Activated CD8-positive, alpha-beta T cell treated with anti-CD3 and anti-CD28 coated beads for 36 hours (primary cell): ENCODE measurements at regions of chr17 and their contacts with region 1.

Region 1: DNA sequence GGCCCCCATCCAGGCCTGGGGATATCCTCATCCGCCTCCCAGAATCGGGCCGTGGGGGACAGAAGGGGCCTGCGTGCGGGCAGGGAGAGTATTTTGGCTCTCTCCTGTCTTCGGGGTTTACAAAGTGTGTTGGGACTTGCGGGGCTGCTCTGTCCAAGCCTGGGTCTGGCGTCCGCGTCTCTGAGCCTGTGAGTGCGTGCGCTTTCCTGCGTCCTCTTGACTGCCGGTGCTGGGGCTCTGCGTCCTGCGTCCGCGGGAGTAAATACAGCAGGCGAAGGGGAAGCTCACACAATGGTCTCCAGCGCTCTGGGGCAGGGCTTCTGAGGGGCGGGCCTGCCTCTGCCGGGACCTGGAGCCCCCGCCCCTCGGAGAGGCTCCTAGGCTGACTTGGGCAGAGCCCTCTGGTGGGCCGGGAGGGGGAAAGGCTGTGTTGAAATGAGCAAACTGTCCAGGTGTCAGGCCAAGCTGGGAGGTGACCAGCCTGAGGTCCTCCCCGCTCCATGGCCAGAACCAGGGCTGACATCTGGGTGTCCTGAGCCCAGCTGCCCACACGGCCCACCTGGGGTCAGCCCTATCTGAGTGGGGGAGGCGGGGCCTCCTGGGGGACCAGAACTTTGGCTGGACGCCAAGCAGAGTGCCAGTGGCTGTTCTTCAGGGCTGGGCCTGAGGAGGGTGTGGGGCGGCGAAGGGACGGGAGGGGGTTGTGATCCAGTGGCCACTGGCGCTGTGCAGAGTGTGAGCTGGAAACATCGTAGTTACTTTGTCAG is 233.6 kb downstream of the SEC14L1 start:
- DNase-seq: peak; percentile 89
- ATAC-seq: peak; percentile 78
- H3K4me3 Mint-ChIP-seq: peak overlapping the region; percentile 92
- H3K27ac Mint-ChIP-seq: peak overlapping the region; percentile 91
- H3K4me1 Mint-ChIP-seq: peaks cover 56% of the 10 kb centered on the region
- H3K27me3 Mint-ChIP-seq: no peaks in the 10 kb centered on the region
- CTCF ChIP-seq: peak; percentile 31

Region 2: DNA sequence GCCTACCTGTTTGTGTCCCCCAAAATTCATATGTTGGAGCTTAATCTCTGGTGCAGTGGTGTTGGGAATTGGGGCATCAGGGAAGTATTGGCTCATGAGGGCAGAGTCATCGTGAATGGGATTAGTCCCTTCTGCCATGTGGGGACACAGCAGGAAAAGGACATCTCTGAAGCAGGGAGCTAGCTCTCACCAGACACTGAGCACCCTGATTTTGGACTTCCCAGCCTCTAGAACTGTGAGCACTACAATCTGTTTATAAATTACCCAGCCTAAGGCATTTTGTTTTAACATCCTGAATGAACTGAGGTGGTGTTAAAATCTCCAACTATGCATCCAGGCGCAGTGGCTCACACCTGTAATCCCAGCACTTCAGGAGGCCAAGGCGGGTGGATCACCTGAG is 27.6 kb before region 1 on chr17:
- CTCF ChIA-PET with region 1: no interaction called
- POLR2A ChIA-PET with region 1: no interaction called
- intact Hi-C with region 1: no loop called
- DNase-seq: no peak
- ATAC-seq: no peak
- H3K4me3 Mint-ChIP-seq: no peak overlapping the region
- H3K27ac Mint-ChIP-seq: no peak overlapping the region
- H3K4me1 Mint-ChIP-seq: peaks cover 39% of the 10 kb centered on the region
- H3K27me3 Mint-ChIP-seq: no peaks in the 10 kb centered on the region
- CTCF ChIP-seq: no peak

Region 3: GRCh38 chr17:77391668-77392375 is 17.5 kb after region 1 on chr17:
- CTCF ChIA-PET with region 1: interaction called, 20 read pairs
- POLR2A ChIA-PET with region 1: interaction called, 52 read pairs
- intact Hi-C with region 1: no loop called
- DNase-seq: peak; percentile 84
- ATAC-seq: peak; percentile 62
- H3K4me3 Mint-ChIP-seq: peak overlapping the region; percentile 81
- H3K27ac Mint-ChIP-seq: peak overlapping the region; percentile 85
- H3K4me1 Mint-ChIP-seq: peaks cover 68% of the 10 kb centered on the region
- H3K27me3 Mint-ChIP-seq: no peaks in the 10 kb centered on the region
- CTCF ChIP-seq: no peak

Region 4: GRCh38 chr17:77462553-77463497 is 88.5 kb after region 1 on chr17:
- CTCF ChIA-PET with region 1: no interaction called
- POLR2A ChIA-PET with region 1: no interaction called
- intact Hi-C with region 1: no loop called
- DNase-seq: no peak
- ATAC-seq: no peak
- H3K4me3 Mint-ChIP-seq: peak overlapping the region; percentile 84
- H3K27ac Mint-ChIP-seq: peak overlapping the region; percentile 96
- H3K4me1 Mint-ChIP-seq: peaks cover 64% of the 10 kb centered on the region
- H3K27me3 Mint-ChIP-seq: no peaks in the 10 kb centered on the region
- CTCF ChIP-seq: no peak